GM12878 (cell line): ENCODE measurements at regions of chr2 and their contacts with region 1.

Region 1: GRCh38 chr2:176931588-176932563 is 280.7 kb upstream of the HNRNPA3 start:
- DNase-seq: peak; percentile 97
- ATAC-seq: peak; percentile 92
- H3K4me3 ChIP-seq: no peak overlapping the region
- H3K27ac ChIP-seq: peak overlapping the region; percentile 72
- H3K4me1 ChIP-seq: peaks cover 38% of the 10 kb centered on the region
- H3K27me3 ChIP-seq: no peaks in the 10 kb centered on the region
- CTCF ChIP-seq: no peak
- EP300 ChIP-seq: peak; percentile 90 to 95
- POLR2A ChIP-seq: no peak
- RAD21 ChIP-seq: peak; percentile 21; the same call in 1 of the 2 replicates

Region 2: DNA sequence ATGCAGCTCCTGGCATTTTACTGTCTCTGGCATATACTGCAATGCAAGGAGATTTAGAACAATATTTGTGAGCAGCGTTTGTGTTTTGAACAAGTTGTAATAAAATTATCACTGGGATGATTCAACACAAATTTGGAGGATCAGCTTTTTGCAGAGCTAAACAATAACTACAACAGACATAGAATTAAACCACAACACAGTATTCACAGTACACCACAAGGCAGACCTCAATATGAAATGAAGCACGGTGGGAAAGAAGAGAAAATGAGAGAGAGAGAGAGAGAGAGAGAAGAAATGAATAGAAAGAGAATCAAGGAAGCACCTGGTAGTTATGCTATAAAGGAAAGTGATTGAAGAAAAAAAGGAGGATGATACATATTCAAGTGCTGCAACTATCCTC is 704.0 kb before region 1 on chr2:
- CTCF ChIA-PET with region 1: no interaction called
- POLR2A ChIA-PET with region 1: no interaction called
- RAD21 ChIA-PET with region 1: no interaction called
- SMC1A ChIA-PET with region 1: no interaction called
- in situ Hi-C with region 1: no loop called
- intact Hi-C with region 1: no loop called
- DNase-seq: no peak
- ATAC-seq: no peak
- H3K4me3 ChIP-seq: no peak overlapping the region
- H3K27ac ChIP-seq: no peak overlapping the region
- H3K4me1 ChIP-seq: no peaks in the 10 kb centered on the region
- H3K27me3 ChIP-seq: no peaks in the 10 kb centered on the region
- CTCF ChIP-seq: no peak
- EP300 ChIP-seq: no peak
- POLR2A ChIP-seq: no peak
- RAD21 ChIP-seq: no peak

Region 3: DNA sequence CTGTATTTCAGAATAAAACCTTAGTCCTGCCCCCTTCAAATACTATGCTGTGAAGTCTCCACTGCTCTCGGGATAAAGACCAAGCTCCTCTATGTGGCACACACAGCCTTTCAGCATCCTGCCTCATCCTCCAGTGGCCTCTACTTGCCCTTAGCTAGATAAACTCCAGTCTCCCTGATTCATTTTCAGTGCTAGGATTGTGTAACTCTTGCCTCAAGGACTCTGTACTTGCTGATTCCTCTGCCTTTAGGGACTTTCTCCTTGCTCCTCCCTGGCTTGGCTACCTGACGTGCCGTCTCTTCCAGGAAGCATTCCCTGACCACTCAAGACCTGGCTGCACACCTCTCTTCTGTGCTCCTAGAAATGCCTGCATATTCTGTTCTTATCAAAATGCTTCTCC is 246.0 kb before region 1 on chr2:
- CTCF ChIA-PET with region 1: no interaction called
- POLR2A ChIA-PET with region 1: no interaction called
- RAD21 ChIA-PET with region 1: no interaction called
- SMC1A ChIA-PET with region 1: no interaction called
- in situ Hi-C with region 1: no loop called
- intact Hi-C with region 1: no loop called
- DNase-seq: no peak
- ATAC-seq: no peak
- H3K4me3 ChIP-seq: no peak overlapping the region
- H3K27ac ChIP-seq: no peak overlapping the region
- H3K4me1 ChIP-seq: no peaks in the 10 kb centered on the region
- H3K27me3 ChIP-seq: peaks cover 0 to 3% of the 10 kb centered on the region in 2 experiments; a peak in 2 of 4 replicates
- CTCF ChIP-seq: no peak
- EP300 ChIP-seq: no peak
- POLR2A ChIP-seq: no peak
- RAD21 ChIP-seq: no peak

Region 4: DNA sequence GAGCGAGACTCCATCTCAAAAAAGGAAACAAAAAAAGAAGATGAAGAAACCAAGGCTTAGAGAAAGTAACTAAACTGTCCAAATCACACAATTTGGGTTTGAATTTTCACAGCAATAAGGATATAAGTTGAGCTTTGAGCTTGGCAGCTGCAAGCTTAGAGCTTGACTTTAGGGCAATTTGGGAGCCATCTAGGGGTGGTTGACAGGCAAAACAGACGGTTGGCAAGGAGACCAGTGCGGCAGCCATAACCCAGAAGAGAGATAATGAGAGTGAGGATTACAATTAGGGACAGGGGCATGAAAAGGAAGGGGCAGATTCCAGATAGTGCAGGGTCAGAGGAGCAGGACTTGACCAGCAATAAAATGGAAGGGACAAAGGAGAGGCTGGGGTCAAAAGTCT is 101.5 kb before region 1 on chr2:
- CTCF ChIA-PET with region 1: interaction called, 3 read pairs
- POLR2A ChIA-PET with region 1: no interaction called
- RAD21 ChIA-PET with region 1: no interaction called
- SMC1A ChIA-PET with region 1: interaction called, 5 read pairs
- in situ Hi-C with region 1: no loop called
- intact Hi-C with region 1: loop called (anchors 5 kb)
- DNase-seq: no peak
- ATAC-seq: peak; percentile 80
- H3K4me3 ChIP-seq: no peak overlapping the region
- H3K27ac ChIP-seq: no peak overlapping the region
- H3K4me1 ChIP-seq: no peaks in the 10 kb centered on the region
- H3K27me3 ChIP-seq: no peaks in the 10 kb centered on the region
- CTCF ChIP-seq: peak in 2 of 3 experiments; percentile 20 to 21; a peak in 3 of 6 replicates
- EP300 ChIP-seq: no peak
- POLR2A ChIP-seq: no peak
- RAD21 ChIP-seq: no peak

Region 5: GRCh38 chr2:176910828-176911227 is 21.0 kb before region 1 on chr2:
- CTCF ChIA-PET with region 1: interaction called, 3 read pairs
- POLR2A ChIA-PET with region 1: interaction called, 4 read pairs
- RAD21 ChIA-PET with region 1: no interaction called
- SMC1A ChIA-PET with region 1: interaction called, 11 read pairs
- in situ Hi-C with region 1: no loop called
- intact Hi-C with region 1: no loop called
- DNase-seq: no peak
- ATAC-seq: peak; percentile 36; the same call in 2 of the 3 replicates
- H3K4me3 ChIP-seq: no peak overlapping the region
- H3K27ac ChIP-seq: no peak overlapping the region
- H3K4me1 ChIP-seq: no peaks in the 10 kb centered on the region
- H3K27me3 ChIP-seq: no peaks in the 10 kb centered on the region
- CTCF ChIP-seq: no peak
- EP300 ChIP-seq: no peak
- POLR2A ChIP-seq: no peak
- RAD21 ChIP-seq: no peak

Region 6: DNA sequence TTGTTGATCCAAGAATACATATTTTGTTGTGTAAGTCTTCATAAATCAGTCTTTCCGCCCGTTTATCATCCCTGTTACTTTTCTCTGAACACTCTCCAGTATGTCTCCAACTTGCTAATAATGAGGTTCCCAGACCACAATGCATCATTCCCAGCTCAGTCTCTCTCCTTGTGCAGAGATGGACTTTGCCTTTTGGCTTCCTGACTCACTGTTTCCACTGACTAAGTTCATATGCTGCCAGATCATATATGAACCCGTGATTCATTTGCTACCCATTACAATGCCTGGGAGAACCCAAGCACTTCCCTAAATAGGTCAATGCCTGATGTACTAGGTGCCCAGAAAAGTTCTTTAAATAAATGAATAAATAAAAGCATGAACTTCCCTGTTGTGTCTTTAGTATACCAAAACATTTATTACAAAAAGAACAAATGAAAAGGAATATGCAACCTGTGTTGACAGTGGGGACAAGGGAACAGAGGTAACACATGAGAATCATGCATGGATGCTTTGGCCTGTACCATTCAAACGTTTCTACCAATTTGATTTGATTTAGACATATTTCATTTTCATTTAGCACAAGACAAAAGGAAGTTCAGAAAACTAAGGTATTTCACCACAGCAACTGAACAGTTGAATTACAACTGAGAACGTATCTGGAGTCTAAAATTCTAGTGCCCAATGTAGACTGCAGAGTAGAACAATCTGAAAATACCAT is 65.4 kb after region 1 on chr2:
- CTCF ChIA-PET with region 1: no interaction called
- POLR2A ChIA-PET with region 1: interaction called, 7 read pairs
- RAD21 ChIA-PET with region 1: interaction called, 18 read pairs
- SMC1A ChIA-PET with region 1: interaction called, 9 read pairs
- in situ Hi-C with region 1: no loop called
- intact Hi-C with region 1: loop called (anchors 1 kb)
- DNase-seq: peak; percentile 64
- ATAC-seq: peak; percentile 82
- H3K4me3 ChIP-seq: peak overlapping the region; percentile 7; the same call in 1 of the 2 replicates
- H3K27ac ChIP-seq: peak overlapping the region; percentile 85
- H3K4me1 ChIP-seq: peaks cover 37% of the 10 kb centered on the region
- H3K27me3 ChIP-seq: no peaks in the 10 kb centered on the region
- CTCF ChIP-seq: no peak
- EP300 ChIP-seq: peak; percentile 73 to 86; a peak in 3 of 4 replicates
- POLR2A ChIP-seq: no peak
- RAD21 ChIP-seq: 0 out of 2 replicates have a peak, but pooled peaks have one; percentile 7

Region 7: GRCh38 chr2:177263451-177264208 is 331.8 kb after region 1 on chr2:
- CTCF ChIA-PET with region 1: no interaction called
- POLR2A ChIA-PET with region 1: no interaction called
- RAD21 ChIA-PET with region 1: no interaction called
- SMC1A ChIA-PET with region 1: no interaction called
- in situ Hi-C with region 1: no loop called
- intact Hi-C with region 1: no loop called
- DNase-seq: peak; percentile 71
- ATAC-seq: peak; percentile 74
- H3K4me3 ChIP-seq: peak overlapping the region; percentile 72
- H3K27ac ChIP-seq: peak overlapping the region; percentile 99
- H3K4me1 ChIP-seq: peaks cover 12% of the 10 kb centered on the region
- H3K27me3 ChIP-seq: no peaks in the 10 kb centered on the region
- CTCF ChIP-seq: peak; percentile 85 to 96 (median 86); a peak in 5 of 6 replicates
- EP300 ChIP-seq: peak; percentile 90 to 93
- POLR2A ChIP-seq: peak; percentile 81
- RAD21 ChIP-seq: peak; percentile 62